ENCODE measurements at regions of chr2 and their contacts with region 1.

Region 1: DNA sequence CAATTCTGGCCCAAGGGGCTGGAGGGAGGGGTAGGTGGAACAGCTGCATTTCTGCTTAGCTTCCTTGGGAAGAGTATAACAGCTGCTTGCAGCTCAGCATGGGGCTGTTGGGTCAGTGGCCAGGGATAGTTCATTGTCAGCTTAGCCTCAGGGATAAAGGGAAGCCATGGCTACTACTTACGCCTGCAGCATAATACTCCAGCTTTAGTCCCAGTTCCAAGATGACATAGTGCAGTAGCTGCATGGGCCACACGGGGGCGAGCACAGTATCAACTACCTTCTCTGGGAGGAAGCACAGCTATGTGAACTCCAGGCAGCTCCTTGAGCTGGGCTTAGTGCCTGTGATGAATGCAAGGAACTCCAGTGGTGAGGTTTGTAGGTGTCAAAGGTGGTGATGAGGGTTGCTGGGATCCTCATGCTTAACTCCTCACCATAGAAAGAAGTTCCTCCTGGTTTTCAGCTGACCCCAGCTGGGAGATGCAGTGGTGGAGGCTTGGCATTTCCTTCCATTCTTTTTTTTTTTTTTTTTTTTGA is 35.4 kb upstream of the RHOB start:
- DNase-seq: no peak
- H3K4me3 ChIP-seq: no peak overlapping the region
- H3K27me3 ChIP-seq: peaks cover 13% of the 10 kb centered on the region
- CTCF ChIP-seq: peak; percentile 93

Region 2: GRCh38 chr2:19835781-19836281 is 575.6 kb before region 1 on chr2:
- CTCF ChIA-PET with region 1: no interaction called
- POLR2A ChIA-PET with region 1: no interaction called
- DNase-seq: no peak
- H3K4me3 ChIP-seq: no peak overlapping the region
- H3K27me3 ChIP-seq: no peaks in the 10 kb centered on the region; the same call in 1 of the 2 replicates
- CTCF ChIP-seq: no peak

Region 3: DNA sequence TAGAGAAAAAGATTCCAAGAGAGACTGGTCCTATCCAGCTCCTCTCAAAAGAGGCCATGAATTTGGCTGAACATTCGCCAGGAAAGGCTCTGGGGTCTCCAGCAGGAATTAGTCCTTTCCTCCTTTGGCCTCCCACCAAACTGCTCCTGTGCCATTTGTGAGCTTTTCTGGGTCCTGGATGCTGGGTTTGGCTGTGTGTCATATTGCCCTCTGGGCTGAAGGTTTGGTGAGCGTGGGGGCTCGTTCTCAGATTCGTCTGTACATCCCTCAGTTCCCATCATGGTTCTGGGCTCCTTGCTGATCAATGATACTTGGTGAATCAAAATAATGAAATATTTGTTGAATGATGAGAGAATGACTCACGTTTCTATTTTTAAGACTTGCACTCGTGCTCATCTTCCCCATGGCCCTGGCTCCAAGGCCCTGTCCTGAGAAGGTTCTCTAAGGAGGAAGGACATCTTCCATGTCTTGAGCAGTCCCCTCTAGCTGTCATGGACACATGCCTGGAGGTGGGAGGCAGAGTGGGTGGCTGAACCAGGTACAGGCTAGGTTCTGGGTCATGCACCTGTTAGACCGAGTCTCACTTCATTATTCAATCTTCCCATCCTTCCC is 12.4 kb before region 1 on chr2:
- CTCF ChIA-PET with region 1: interaction called, 25 read pairs
- POLR2A ChIA-PET with region 1: interaction called, 7 read pairs
- DNase-seq: no peak
- H3K4me3 ChIP-seq: no peak overlapping the region
- H3K27me3 ChIP-seq: peaks cover 5% of the 10 kb centered on the region
- CTCF ChIP-seq: no peak

Region 4: GRCh38 chr2:20424300-20425290 is 13.2 kb after region 1 on chr2:
- CTCF ChIA-PET with region 1: interaction called, 86 read pairs
- POLR2A ChIA-PET with region 1: no interaction called
- DNase-seq: peak; percentile 73
- H3K4me3 ChIP-seq: no peak overlapping the region
- H3K27me3 ChIP-seq: peaks cover 7% of the 10 kb centered on the region; the same call in 1 of the 2 replicates
- CTCF ChIP-seq: no peak

Region 5: GRCh38 chr2:20438334-20439192 is 27.1 kb after region 1 on chr2:
- CTCF ChIA-PET with region 1: interaction called, 48 read pairs
- POLR2A ChIA-PET with region 1: no interaction called
- DNase-seq: no peak
- H3K4me3 ChIP-seq: no peak overlapping the region
- H3K27me3 ChIP-seq: peaks cover 1% of the 10 kb centered on the region; the same call in 1 of the 2 replicates
- CTCF ChIP-seq: no peak

Region 6: GRCh38 chr2:20635675-20636584 is 224.5 kb after region 1 on chr2:
- CTCF ChIA-PET with region 1: interaction called, 138 read pairs
- POLR2A ChIA-PET with region 1: no interaction called
- DNase-seq: no peak
- H3K4me3 ChIP-seq: no peak overlapping the region
- H3K27me3 ChIP-seq: no peaks in the 10 kb centered on the region; the same call in 1 of the 2 replicates
- CTCF ChIP-seq: peak; percentile 97

Region 7: DNA sequence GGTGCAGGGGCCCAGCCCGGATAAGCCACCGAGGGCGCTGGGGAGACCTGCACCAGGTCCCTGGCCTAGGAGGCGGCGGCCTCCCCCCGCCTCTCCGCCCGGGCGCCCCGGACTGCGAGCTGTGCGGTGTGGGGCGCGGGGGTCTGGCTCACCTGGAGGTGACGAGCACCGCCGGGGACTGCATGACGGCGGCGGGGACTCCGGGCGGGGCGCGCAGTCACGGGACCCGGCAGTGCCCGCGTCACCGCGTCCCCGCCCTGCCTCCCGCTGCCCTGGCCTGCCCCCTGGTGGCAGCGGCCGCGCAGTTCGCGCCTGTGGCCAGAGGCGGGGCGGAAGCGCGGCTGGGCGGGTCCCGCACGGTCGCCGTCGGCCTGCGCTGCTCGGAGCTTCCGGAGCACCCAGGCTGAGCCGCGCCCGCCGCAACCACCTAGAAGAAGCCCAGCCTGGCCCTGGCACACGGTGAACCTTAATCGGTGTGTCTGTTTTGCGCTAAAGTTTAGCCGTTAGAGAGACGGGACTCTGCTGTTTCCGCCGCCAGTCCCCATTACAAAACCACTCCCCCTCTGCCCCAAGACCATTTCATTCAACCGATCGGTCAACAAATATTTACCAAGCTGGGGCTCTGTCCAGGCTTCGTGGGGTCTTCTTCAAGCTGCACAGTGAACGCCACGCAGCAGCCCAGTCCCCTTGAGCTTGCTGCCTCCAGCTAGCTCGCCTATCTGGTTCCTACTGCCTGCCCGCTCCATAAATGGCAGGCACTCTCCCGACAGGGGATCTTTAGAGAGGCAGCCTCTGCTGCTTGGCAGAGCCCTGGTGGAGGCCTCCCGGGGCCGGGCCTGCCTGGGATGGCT is 239.7 kb after region 1 on chr2 and contains the start of gene HS1BP3:
- CTCF ChIA-PET with region 1: interaction called, 22 read pairs
- POLR2A ChIA-PET with region 1: interaction called, 7 read pairs
- DNase-seq: no peak
- H3K4me3 ChIP-seq: peak within 1 kb of the TSS; percentile 88
- H3K27me3 ChIP-seq: peaks cover 4% of the 10 kb centered on the region
- CTCF ChIP-seq: peak; percentile 34
- polyA plus RNA-seq, gene HS1BP3: 8.3 and 13.6 TPM in 2 replicates

Region 8: GRCh38 chr2:20916604-20917286 is 505.3 kb after region 1 on chr2:
- CTCF ChIA-PET with region 1: no interaction called
- POLR2A ChIA-PET with region 1: no interaction called
- DNase-seq: no peak
- H3K4me3 ChIP-seq: no peak overlapping the region
- H3K27me3 ChIP-seq: no peaks in the 10 kb centered on the region
- CTCF ChIP-seq: peak; percentile 53

Measured in BJ (cell line).